T-cell (primary cell): ENCODE measurements at regions of chr13 and their contacts with region 1.

Region 1: GRCh38 chr13:99269627-99270241 is 11.6 kb upstream of the GPR18 start:
- DNase-seq: peak in 16 of 35 experiments; percentile 15 to 81 (median 25)
- ATAC-seq: peak; percentile 66 to 81 (median 70)
- H3K4me3 ChIP-seq: no peak overlapping the region
- H3K4me3 Mint-ChIP-seq: no peak overlapping the region
- H3K27ac ChIP-seq: peak overlapping the region; percentile 87
- H3K27ac Mint-ChIP-seq: peak overlapping the region; percentile 84 to 87
- H3K4me1 ChIP-seq: peaks cover 26 to 32% of the 10 kb centered on the region in 2 experiments
- H3K4me1 Mint-ChIP-seq: peaks cover 63 to 65% (median 64%) of the 10 kb centered on the region in 3 donors
- H3K27me3 ChIP-seq: no peaks in the 10 kb centered on the region
- H3K27me3 Mint-ChIP-seq: no peaks in the 10 kb centered on the region

Region 2: DNA sequence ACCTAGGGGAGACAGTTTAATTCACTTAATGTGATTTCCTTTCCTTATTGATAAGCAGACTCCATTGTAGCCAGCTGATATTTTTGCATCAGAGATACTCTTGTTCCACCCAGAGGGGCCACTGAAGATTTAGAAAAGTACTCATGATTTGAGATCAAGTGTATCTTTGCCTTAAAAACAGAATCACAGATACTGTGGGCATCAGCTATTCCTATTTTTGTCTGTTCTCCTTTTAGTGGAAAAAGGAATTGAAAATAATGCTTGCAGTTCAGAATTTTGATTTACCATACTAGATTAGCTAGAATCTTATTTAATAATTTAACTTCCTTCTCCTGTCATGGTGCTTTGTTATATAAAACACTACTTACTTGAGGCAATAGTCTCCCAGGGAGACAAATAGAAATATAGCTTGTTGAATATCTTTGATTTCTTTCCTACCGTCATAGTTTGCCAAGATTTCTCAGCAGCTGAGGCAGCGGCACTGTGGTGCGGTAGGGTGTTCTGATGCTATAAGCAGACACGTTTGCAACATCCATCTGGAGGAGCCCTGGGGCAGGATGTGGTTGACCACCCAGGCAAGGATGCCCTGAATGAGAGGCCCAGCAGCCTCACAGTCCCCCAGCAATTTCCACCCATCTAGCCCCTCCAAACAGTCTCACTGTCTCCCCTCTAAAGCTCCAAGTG is 1882.8 kb before region 1 on chr13:
- CTCF ChIA-PET with region 1: no interaction called
- POLR2A ChIA-PET with region 1: no interaction called
- DNase-seq: peak in 17 of 35 experiments; percentile 0 to 30 (median 8)
- ATAC-seq: peak in 2 of 4 experiments; percentile 48 to 70
- H3K4me3 ChIP-seq: no peak overlapping the region
- H3K4me3 Mint-ChIP-seq: no peak overlapping the region
- H3K27ac ChIP-seq: no peak overlapping the region
- H3K27ac Mint-ChIP-seq: no peak overlapping the region
- H3K4me1 ChIP-seq: peaks cover 6 to 9% of the 10 kb centered on the region in 2 experiments
- H3K4me1 Mint-ChIP-seq: peaks cover 18 to 29% (median 25%) of the 10 kb centered on the region in 3 donors
- H3K27me3 ChIP-seq: no peaks in the 10 kb centered on the region
- H3K27me3 Mint-ChIP-seq: no peaks in the 10 kb centered on the region

Region 3: DNA sequence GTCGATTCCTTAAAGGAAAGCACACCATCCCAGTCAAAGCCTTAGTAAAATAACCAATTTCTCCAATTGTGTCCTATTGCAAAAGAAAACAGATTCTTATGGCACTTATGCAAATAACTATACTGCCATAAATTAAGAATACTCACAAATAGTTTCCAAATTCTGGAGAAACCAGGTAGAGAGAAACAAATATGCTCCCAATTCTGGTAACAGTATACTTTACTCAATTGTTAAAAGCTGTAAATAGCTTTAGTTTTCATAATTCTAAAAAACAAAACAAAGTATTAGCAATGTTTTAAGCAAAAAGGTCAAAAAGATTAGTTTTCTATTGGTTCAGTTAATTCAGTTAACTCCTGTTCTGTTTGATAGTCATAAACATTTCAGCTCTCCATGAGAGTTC is 87.3 kb before region 1 on chr13:
- CTCF ChIA-PET with region 1: interaction called, 45 to 246 read pairs
- POLR2A ChIA-PET with region 1: interaction called in 1 of 2 experiments, 6 read pairs
- DNase-seq: no peak
- ATAC-seq: no peak
- H3K4me3 ChIP-seq: no peak overlapping the region
- H3K4me3 Mint-ChIP-seq: no peak overlapping the region
- H3K27ac ChIP-seq: no peak overlapping the region
- H3K27ac Mint-ChIP-seq: no peak overlapping the region
- H3K4me1 ChIP-seq: peaks cover 16 to 30% of the 10 kb centered on the region in 2 experiments
- H3K4me1 Mint-ChIP-seq: peaks cover 30 to 33% (median 31%) of the 10 kb centered on the region in 3 donors
- H3K27me3 ChIP-seq: no peaks in the 10 kb centered on the region
- H3K27me3 Mint-ChIP-seq: no peaks in the 10 kb centered on the region

Region 4: GRCh38 chr13:99258210-99258860 is 11.4 kb before region 1 on chr13 and contains the start of gene GPR18:
- CTCF ChIA-PET with region 1: interaction called, 7 to 107 read pairs
- POLR2A ChIA-PET with region 1: interaction called, 3 to 10 read pairs
- DNase-seq: peak in 23 of 35 experiments; percentile 15 to 74 (median 35)
- ATAC-seq: peak; percentile 81 to 92 (median 86)
- H3K4me3 ChIP-seq: peak within 1 kb of the TSS; percentile 54 to 76
- H3K4me3 Mint-ChIP-seq: peak within 1 kb of the TSS; percentile 89 to 93 (median 90)
- H3K27ac ChIP-seq: peak within 1 kb of the TSS; percentile 85
- H3K27ac Mint-ChIP-seq: peak within 1 kb of the TSS; percentile 92 to 93
- H3K4me1 ChIP-seq: peaks cover 30 to 53% of the 10 kb centered on the region in 2 experiments
- H3K4me1 Mint-ChIP-seq: peaks cover 65 to 82% (median 74%) of the 10 kb centered on the region in 3 donors
- H3K27me3 ChIP-seq: no peaks in the 10 kb centered on the region
- H3K27me3 Mint-ChIP-seq: no peaks in the 10 kb centered on the region
- total RNA-seq, gene GPR18: 15.2 to 26.7 (median 16.7) TPM

Region 5: DNA sequence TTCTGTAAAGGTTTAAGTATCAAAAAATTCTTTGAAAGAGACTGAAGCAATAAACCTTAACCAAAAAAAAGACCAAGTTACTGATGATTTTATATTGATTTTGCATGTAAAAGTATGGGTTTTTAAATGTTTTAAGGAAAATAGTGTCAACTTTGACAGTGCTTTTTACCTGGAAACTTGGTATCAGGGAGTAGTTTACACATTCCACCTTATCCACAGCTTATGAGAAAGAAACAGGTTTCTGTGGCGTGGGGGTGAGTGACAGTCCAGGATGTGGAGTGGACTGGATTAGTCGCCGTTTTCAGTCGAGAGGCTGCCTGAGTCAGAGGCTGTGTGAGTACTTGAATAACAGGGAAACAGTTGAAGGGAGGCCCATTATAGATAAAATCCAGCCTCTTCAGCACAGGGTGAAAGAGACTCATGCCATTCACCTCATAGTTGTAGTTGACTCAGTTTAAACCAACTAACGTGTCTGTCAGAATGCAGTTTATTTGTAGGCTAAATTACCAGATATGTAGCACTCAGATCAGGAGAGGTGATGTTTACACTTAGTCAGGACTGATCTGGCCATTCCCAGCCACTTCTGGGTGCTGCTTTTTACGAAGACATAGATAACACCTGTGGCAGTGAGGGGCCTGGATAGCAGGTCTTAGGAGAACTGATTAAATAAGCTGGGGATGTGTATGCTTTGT is 38.1 kb after region 1 on chr13:
- CTCF ChIA-PET with region 1: interaction called, 6 to 32 read pairs
- POLR2A ChIA-PET with region 1: interaction called, 4 to 19 read pairs
- DNase-seq: peak in 5 of 35 experiments; percentile 14 to 54 (median 45)
- ATAC-seq: peak; percentile 22 to 40 (median 29)
- H3K4me3 ChIP-seq: peak overlapping the region in 1 of 2 donors; percentile 9
- H3K4me3 Mint-ChIP-seq: peak overlapping the region; percentile 94 to 99 (median 96)
- H3K27ac ChIP-seq: peak overlapping the region; percentile 80
- H3K27ac Mint-ChIP-seq: peak overlapping the region; percentile 96
- H3K4me1 ChIP-seq: peaks cover 46 to 53% of the 10 kb centered on the region in 2 experiments
- H3K4me1 Mint-ChIP-seq: peaks cover 78 to 95% (median 83%) of the 10 kb centered on the region in 3 donors
- H3K27me3 ChIP-seq: no peaks in the 10 kb centered on the region
- H3K27me3 Mint-ChIP-seq: no peaks in the 10 kb centered on the region

Region 6: GRCh38 chr13:99366075-99366987 is 96.6 kb after region 1 on chr13:
- CTCF ChIA-PET with region 1: interaction called, 4 to 21 read pairs
- POLR2A ChIA-PET with region 1: interaction called in 1 of 2 experiments, 3 read pairs
- DNase-seq: peak in 1 of 35 experiments; percentile 41
- ATAC-seq: no peak
- H3K4me3 ChIP-seq: no peak overlapping the region
- H3K4me3 Mint-ChIP-seq: peak overlapping the region; percentile 26 to 76 (median 67)
- H3K27ac ChIP-seq: peak overlapping the region; percentile 84
- H3K27ac Mint-ChIP-seq: peak overlapping the region; percentile 98
- H3K4me1 ChIP-seq: peaks cover 50 to 70% of the 10 kb centered on the region in 2 experiments
- H3K4me1 Mint-ChIP-seq: peaks cover 90 to 94% (median 91%) of the 10 kb centered on the region in 3 donors
- H3K27me3 ChIP-seq: no peaks in the 10 kb centered on the region
- H3K27me3 Mint-ChIP-seq: no peaks in the 10 kb centered on the region

Region 7: GRCh38 chr13:99417201-99418102 is 147.7 kb after region 1 on chr13:
- CTCF ChIA-PET with region 1: interaction called, 4 to 12 read pairs
- POLR2A ChIA-PET with region 1: no interaction called
- DNase-seq: peak in 24 of 35 experiments; percentile 13 to 69 (median 50)
- ATAC-seq: peak; percentile 10 to 45 (median 11)
- H3K4me3 ChIP-seq: peak overlapping the region; percentile 47 to 84
- H3K4me3 Mint-ChIP-seq: no peak overlapping the region
- H3K27ac ChIP-seq: peak overlapping the region; percentile 71
- H3K27ac Mint-ChIP-seq: no peak overlapping the region
- H3K4me1 ChIP-seq: peaks cover 74 to 89% of the 10 kb centered on the region in 2 experiments
- H3K4me1 Mint-ChIP-seq: peaks cover 54 to 65% (median 57%) of the 10 kb centered on the region in 3 donors
- H3K27me3 ChIP-seq: peaks cover 0 to 14% of the 10 kb centered on the region in 2 experiments
- H3K27me3 Mint-ChIP-seq: no peaks in the 10 kb centered on the region

Region 8: GRCh38 chr13:99501184-99501847 is 231.6 kb after region 1 on chr13 and contains the start of gene TM9SF2:
- CTCF ChIA-PET with region 1: interaction called, 6 to 12 read pairs
- POLR2A ChIA-PET with region 1: interaction called in 1 of 2 experiments, 3 read pairs
- DNase-seq: peak; percentile 87 to 99 (median 93)
- ATAC-seq: peak; percentile 59 to 67 (median 62)
- H3K4me3 ChIP-seq: peak within 1 kb of the TSS; percentile 94 to 96
- H3K4me3 Mint-ChIP-seq: peak within 1 kb of the TSS; percentile 96 to 98 (median 96)
- H3K27ac ChIP-seq: peak within 1 kb of the TSS; percentile 86
- H3K27ac Mint-ChIP-seq: peak within 1 kb of the TSS; percentile 95 to 96
- H3K4me1 ChIP-seq: peaks cover 60 to 62% of the 10 kb centered on the region in 2 experiments
- H3K4me1 Mint-ChIP-seq: peaks cover 78 to 89% (median 85%) of the 10 kb centered on the region in 3 donors
- H3K27me3 ChIP-seq: no peaks in the 10 kb centered on the region
- H3K27me3 Mint-ChIP-seq: no peaks in the 10 kb centered on the region
- total RNA-seq, gene TM9SF2: 43.2 to 54.0 (median 48.8) TPM